ENCODE measurements at regions of chr22 and their contacts with region 1.

Region 1: DNA sequence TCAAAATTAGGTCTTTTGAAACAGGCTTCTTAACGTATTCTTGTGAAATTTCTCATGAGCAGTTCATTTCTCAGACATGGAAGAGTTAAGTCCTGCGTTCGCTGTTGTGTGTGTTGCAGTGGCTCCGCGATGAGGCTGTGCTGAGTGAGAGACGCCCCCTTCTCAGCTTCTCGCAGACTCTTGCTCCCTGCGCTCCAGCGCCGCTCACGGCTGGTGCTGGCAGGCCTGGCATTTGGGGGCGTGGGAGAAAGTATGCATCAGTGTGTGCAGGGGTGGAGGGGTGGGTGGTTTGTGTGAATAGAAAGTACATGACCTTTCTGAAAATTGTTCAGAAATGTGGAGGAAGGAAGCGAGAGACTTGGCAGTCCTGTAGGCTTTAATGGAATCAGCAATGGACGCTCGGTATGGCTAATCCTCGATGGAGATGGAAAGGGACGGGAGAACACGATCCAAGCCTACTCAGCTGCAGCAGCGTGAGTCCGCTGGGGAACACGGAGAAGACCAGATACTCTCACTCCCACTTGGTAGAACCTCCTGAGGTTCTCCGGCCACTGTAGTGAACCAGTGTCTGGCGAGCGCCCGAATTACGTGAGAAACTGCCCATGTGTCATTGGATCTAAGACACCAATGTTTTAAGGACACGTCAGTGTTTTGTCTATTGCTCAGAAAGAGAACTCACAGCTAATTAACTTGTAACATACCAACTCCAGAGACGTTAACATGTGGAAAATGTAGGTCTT is 5.9 kb downstream of the TAB1 start:
- DNase-seq: no peak
- H3K4me3 ChIP-seq: no peak overlapping the region
- H3K27ac ChIP-seq: no peak overlapping the region
- H3K4me1 ChIP-seq: peaks cover 2 to 15% (median 5%) of the 10 kb centered on the region in 4 donors
- H3K27me3 ChIP-seq: no peaks in the 10 kb centered on the region
- CTCF ChIP-seq: no peak
- EP300 ChIP-seq: no peak
- POLR2A ChIP-seq: no peak

Region 2: DNA sequence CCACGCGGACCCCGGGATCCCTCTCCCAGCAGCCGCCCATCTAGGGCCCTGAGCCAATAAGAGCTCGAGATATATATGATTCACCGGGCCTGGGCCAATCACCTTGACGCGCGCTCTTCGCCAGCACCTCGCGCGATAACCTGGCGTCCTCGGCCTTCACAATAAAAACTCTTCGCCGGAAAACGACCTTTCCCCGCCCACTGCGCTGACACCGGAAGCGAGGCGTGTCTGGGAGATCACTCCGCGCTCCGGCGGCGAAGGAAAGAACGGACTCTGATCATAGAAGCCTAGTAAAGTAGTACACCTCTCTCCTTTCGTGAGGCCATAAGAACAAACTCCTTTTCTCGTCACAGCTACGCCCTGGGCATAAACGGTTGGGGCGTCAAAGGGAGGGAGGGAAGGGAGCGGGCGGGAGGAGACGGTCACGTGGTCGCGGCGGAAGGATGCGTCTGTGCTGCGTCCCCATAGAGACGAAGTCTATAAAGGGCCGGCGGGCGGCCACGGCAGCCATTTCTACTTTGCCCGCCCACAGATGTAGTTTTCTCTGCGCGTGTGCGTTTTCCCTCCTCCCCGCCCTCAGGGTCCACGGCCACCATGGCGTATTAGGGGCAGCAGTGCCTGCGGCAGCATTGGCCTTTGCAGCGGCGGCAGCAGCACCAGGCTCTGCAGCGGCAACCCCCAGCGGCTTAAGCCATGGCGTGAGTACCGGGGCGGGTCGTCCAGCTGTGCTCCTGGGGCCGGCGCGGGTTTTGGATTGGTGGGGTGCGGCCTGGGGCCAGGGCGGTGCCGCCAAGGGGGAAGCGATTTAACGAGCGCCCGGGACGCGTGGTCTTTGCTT is 114.8 kb after region 1 on chr22 and contains the start of gene ATF4:
- in situ Hi-C with region 1: no loop called
- intact Hi-C with region 1: loop called (anchors 10 kb)
- DNase-seq: peak; percentile 98
- H3K4me3 ChIP-seq: peak within 1 kb of the TSS; percentile 93 to 96 (median 94)
- H3K27ac ChIP-seq: peak within 1 kb of the TSS; percentile 96 to 100 (median 100)
- H3K4me1 ChIP-seq: peaks cover 22 to 50% (median 41%) of the 10 kb centered on the region in 4 donors
- H3K27me3 ChIP-seq: no peaks in the 10 kb centered on the region
- CTCF ChIP-seq: peak in 1 of 5 experiments; percentile 10
- EP300 ChIP-seq: no peak
- POLR2A ChIP-seq: peak; percentile 100
- total RNA-seq, gene ATF4: 262 to 566 (median 339) TPM

Region 3: GRCh38 chr22:39927544-39927943 is 522.0 kb after region 1 on chr22:
- in situ Hi-C with region 1: no loop called
- intact Hi-C with region 1: no loop called
- DNase-seq: no peak
- H3K4me3 ChIP-seq: no peak overlapping the region
- H3K27ac ChIP-seq: peak overlapping the region in 1 of 4 donors; percentile 18
- H3K4me1 ChIP-seq: peaks cover 0 to 29% (median 7%) of the 10 kb centered on the region in 4 donors
- H3K27me3 ChIP-seq: peaks cover 9% of the 10 kb centered on the region
- CTCF ChIP-seq: no peak
- EP300 ChIP-seq: no peak
- POLR2A ChIP-seq: no peak